T-cell (primary cell): ENCODE measurements at regions of chr5 and their contacts with region 1.

Region 1: DNA sequence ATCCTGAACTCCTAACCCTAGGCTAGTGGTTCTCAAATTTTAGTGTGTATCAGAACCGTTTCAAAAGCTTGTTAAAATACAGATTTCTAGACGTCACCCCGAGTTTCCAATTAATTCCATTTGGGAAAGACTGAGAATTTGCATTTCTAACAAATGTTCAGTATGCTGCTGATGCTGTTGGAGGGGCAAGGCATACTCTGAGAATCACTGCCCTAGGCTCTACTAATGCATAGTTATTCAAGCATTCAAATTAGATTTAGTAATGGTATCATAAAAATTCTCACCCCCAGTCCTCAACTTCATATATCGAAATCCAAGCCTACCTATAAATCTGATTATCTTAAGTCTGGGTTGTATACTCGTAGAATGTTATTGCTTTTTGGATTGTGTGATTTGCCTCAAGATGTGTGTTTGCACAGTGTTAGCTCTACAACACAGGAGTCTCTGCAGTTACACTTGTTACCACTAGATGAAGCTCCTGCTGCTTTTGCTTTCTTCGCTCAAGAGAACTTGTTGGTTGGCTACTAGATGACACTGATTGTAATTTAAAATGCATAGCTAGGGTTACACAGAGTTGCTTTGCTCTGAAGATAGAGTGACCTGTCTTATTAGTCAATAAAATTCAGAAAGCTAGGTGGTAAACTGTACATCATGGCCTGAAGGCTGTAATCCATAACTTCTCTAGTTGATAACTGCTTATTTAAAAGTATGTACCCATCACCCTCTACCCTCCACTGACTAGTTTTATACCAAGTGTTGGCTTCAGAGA is 7.5 kb upstream of the ERAP2 start:
- DNase-seq: peak in 11 of 35 experiments; percentile 13 to 76 (median 22)
- ATAC-seq: peak; percentile 95 to 97 (median 96)
- H3K4me3 ChIP-seq: no peak overlapping the region
- H3K4me3 Mint-ChIP-seq: no peak overlapping the region
- H3K27ac ChIP-seq: no peak overlapping the region
- H3K27ac Mint-ChIP-seq: peak overlapping the region; percentile 20 to 62
- H3K4me1 ChIP-seq: peaks cover 11 to 19% of the 10 kb centered on the region in 2 experiments
- H3K4me1 Mint-ChIP-seq: peaks cover 46 to 48% (median 47%) of the 10 kb centered on the region in 3 donors
- H3K27me3 ChIP-seq: no peaks in the 10 kb centered on the region
- H3K27me3 Mint-ChIP-seq: no peaks in the 10 kb centered on the region

Region 2: GRCh38 chr5:96844476-96844990 is 24.3 kb before region 1 on chr5:
- CTCF ChIA-PET with region 1: no interaction called
- POLR2A ChIA-PET with region 1: no interaction called
- DNase-seq: no peak
- ATAC-seq: no peak
- H3K4me3 ChIP-seq: no peak overlapping the region
- H3K4me3 Mint-ChIP-seq: no peak overlapping the region
- H3K27ac ChIP-seq: no peak overlapping the region
- H3K27ac Mint-ChIP-seq: no peak overlapping the region
- H3K4me1 ChIP-seq: no peaks in the 10 kb centered on the region
- H3K4me1 Mint-ChIP-seq: peaks cover 8 to 13% (median 12%) of the 10 kb centered on the region in 3 donors
- H3K27me3 ChIP-seq: no peaks in the 10 kb centered on the region
- H3K27me3 Mint-ChIP-seq: no peaks in the 10 kb centered on the region

Region 3: DNA sequence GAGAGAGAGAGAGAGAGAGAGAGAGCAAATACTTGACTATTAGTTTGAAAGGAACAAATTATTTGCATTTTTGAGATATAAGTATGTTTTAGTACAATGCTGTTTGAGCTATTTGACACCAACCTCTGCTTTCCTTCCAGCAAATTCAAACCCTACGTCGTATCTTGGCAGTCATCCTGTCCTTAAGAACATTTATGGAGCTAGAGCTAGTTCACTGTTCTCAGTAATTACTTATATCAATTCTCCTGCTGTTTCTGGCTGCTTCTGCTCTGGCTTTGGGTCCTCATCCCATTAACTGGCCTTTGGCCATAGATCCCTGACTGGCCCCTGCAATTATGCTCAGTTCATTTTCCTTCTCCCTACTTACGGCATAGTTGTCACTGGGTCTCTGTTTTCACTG is 12.4 kb before region 1 on chr5:
- CTCF ChIA-PET with region 1: interaction called in 1 of 2 experiments, 11 read pairs
- POLR2A ChIA-PET with region 1: no interaction called
- DNase-seq: no peak
- ATAC-seq: no peak
- H3K4me3 ChIP-seq: no peak overlapping the region
- H3K4me3 Mint-ChIP-seq: no peak overlapping the region
- H3K27ac ChIP-seq: no peak overlapping the region
- H3K27ac Mint-ChIP-seq: no peak overlapping the region
- H3K4me1 ChIP-seq: no peaks in the 10 kb centered on the region
- H3K4me1 Mint-ChIP-seq: peaks cover 0 to 5% (median 0%) of the 10 kb centered on the region in 3 donors
- H3K27me3 ChIP-seq: no peaks in the 10 kb centered on the region
- H3K27me3 Mint-ChIP-seq: no peaks in the 10 kb centered on the region

Region 4: GRCh38 chr5:96896806-96897205 is 28.0 kb after region 1 on chr5:
- CTCF ChIA-PET with region 1: interaction called, 10 to 24 read pairs
- POLR2A ChIA-PET with region 1: interaction called, 3 read pairs
- DNase-seq: peak in 2 of 35 experiments; percentile 19 to 28
- ATAC-seq: peak in 1 of 4 experiments; percentile 43
- H3K4me3 ChIP-seq: peak overlapping the region; percentile 22 to 23
- H3K4me3 Mint-ChIP-seq: peak overlapping the region; percentile 60 to 78 (median 74)
- H3K27ac ChIP-seq: peak overlapping the region; percentile 66
- H3K27ac Mint-ChIP-seq: peak overlapping the region; percentile 88 to 91
- H3K4me1 ChIP-seq: peaks cover 3 to 18% of the 10 kb centered on the region in 2 experiments
- H3K4me1 Mint-ChIP-seq: peaks cover 57 to 82% (median 58%) of the 10 kb centered on the region in 3 donors
- H3K27me3 ChIP-seq: no peaks in the 10 kb centered on the region
- H3K27me3 Mint-ChIP-seq: no peaks in the 10 kb centered on the region

Region 5: DNA sequence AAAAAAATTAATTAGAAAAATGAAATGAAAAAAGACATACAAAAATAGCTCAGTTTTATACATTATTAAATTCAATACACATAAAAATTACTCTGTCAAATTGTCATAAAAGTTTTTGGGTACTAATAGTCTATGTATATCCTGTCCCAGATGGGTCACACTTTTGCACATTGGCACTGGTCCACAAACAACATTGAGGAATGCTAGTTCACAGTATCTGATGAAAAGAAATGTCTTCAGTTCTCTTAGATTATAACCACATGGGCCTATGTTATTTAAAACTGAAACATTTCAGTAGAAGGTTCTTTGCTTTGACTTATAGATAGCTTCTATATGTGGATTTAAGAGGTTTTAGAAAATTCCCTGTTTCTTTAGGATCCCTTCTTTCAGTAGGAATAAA is 106.9 kb after region 1 on chr5:
- CTCF ChIA-PET with region 1: interaction called, 4 to 10 read pairs
- POLR2A ChIA-PET with region 1: no interaction called
- DNase-seq: no peak
- ATAC-seq: no peak
- H3K4me3 ChIP-seq: no peak overlapping the region
- H3K4me3 Mint-ChIP-seq: peak overlapping the region in 1 of 3 donors; percentile 69
- H3K27ac ChIP-seq: no peak overlapping the region
- H3K27ac Mint-ChIP-seq: no peak overlapping the region
- H3K4me1 ChIP-seq: peaks cover 19 to 36% of the 10 kb centered on the region in 2 experiments
- H3K4me1 Mint-ChIP-seq: peaks cover 82 to 85% (median 84%) of the 10 kb centered on the region in 3 donors
- H3K27me3 ChIP-seq: no peaks in the 10 kb centered on the region
- H3K27me3 Mint-ChIP-seq: no peaks in the 10 kb centered on the region

Region 6: DNA sequence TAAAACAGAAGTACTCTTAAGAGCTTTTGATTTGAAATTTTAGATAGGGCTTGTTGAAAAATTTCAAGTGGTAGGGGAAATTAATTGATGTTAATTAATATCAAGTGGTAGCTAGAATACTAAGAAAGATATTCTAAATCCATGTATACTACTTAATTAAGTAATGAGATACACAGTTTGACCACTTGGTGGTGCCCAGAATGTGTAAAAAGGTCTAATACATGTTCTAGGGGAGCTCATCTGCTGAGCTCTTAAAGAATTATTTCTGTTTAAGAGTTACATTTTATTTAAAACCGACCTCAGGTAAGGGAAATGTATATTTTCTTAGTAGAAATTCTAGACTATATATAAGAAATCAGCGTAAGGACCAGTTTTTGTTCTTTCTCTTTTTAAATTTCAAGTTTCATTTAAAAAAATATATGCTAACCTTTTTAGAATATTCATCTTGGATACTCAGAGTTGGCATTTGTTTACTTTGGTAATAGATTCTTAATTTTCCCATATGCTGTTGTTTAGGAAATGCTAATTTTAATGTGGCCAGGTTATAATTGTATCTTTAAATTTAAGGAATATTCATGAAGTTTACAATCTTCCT is 128.6 kb after region 1 on chr5:
- CTCF ChIA-PET with region 1: interaction called, 10 to 19 read pairs
- POLR2A ChIA-PET with region 1: interaction called in 1 of 2 experiments, 3 read pairs
- DNase-seq: peak in 15 of 35 experiments; percentile 4 to 57 (median 15)
- ATAC-seq: peak in 3 of 4 experiments; percentile 53 to 67 (median 63)
- H3K4me3 ChIP-seq: no peak overlapping the region
- H3K4me3 Mint-ChIP-seq: no peak overlapping the region
- H3K27ac ChIP-seq: no peak overlapping the region
- H3K27ac Mint-ChIP-seq: no peak overlapping the region
- H3K4me1 ChIP-seq: no peaks in the 10 kb centered on the region
- H3K4me1 Mint-ChIP-seq: peaks cover 0 to 41% (median 39%) of the 10 kb centered on the region in 3 donors
- H3K27me3 ChIP-seq: no peaks in the 10 kb centered on the region
- H3K27me3 Mint-ChIP-seq: no peaks in the 10 kb centered on the region

Region 7: GRCh38 chr5:97162045-97162444 is 293.3 kb after region 1 on chr5:
- CTCF ChIA-PET with region 1: interaction called, 12 to 66 read pairs
- POLR2A ChIA-PET with region 1: no interaction called
- DNase-seq: peak in 24 of 35 experiments; percentile 5 to 82 (median 36)
- ATAC-seq: peak in 2 of 4 experiments; percentile 36 to 48
- H3K4me3 ChIP-seq: no peak overlapping the region
- H3K4me3 Mint-ChIP-seq: no peak overlapping the region
- H3K27ac ChIP-seq: no peak overlapping the region
- H3K27ac Mint-ChIP-seq: no peak overlapping the region
- H3K4me1 ChIP-seq: peaks cover 0 to 2% of the 10 kb centered on the region in 2 experiments
- H3K4me1 Mint-ChIP-seq: peaks cover 0 to 11% (median 7%) of the 10 kb centered on the region in 3 donors
- H3K27me3 ChIP-seq: no peaks in the 10 kb centered on the region
- H3K27me3 Mint-ChIP-seq: no peaks in the 10 kb centered on the region

Region 8: GRCh38 chr5:97355775-97356174 is 487.0 kb after region 1 on chr5:
- CTCF ChIA-PET with region 1: no interaction called
- POLR2A ChIA-PET with region 1: no interaction called
- DNase-seq: no peak
- ATAC-seq: no peak
- H3K4me3 ChIP-seq: no peak overlapping the region
- H3K4me3 Mint-ChIP-seq: no peak overlapping the region
- H3K27ac ChIP-seq: no peak overlapping the region
- H3K27ac Mint-ChIP-seq: no peak overlapping the region
- H3K4me1 ChIP-seq: no peaks in the 10 kb centered on the region
- H3K4me1 Mint-ChIP-seq: no peaks in the 10 kb centered on the region
- H3K27me3 ChIP-seq: peaks cover 0 to 6% of the 10 kb centered on the region in 2 experiments
- H3K27me3 Mint-ChIP-seq: no peaks in the 10 kb centered on the region